ENCODE measurements at regions of chr7 and their contacts with region 1.

Region 1: GRCh38 chr7:44999245-45000095 is 531 bp upstream of the CCM2 start:
- DNase-seq: peak; percentile 98
- ATAC-seq: peak; percentile 88
- H3K4me3 ChIP-seq: peak overlapping the region; percentile 94
- H3K27ac ChIP-seq: peak overlapping the region; percentile 66
- H3K4me1 ChIP-seq: peaks cover 23% of the 10 kb centered on the region
- H3K27me3 ChIP-seq: no peaks in the 10 kb centered on the region
- CTCF ChIP-seq: no peak

Region 2: GRCh38 chr7:44858161-44858560 is 141.3 kb before region 1 on chr7:
- CTCF ChIA-PET with region 1: no interaction called
- POLR2A ChIA-PET with region 1: no interaction called
- intact Hi-C with region 1: loop called (anchors 5 kb)
- DNase-seq: no peak
- ATAC-seq: no peak
- H3K4me3 ChIP-seq: no peak overlapping the region
- H3K27ac ChIP-seq: no peak overlapping the region
- H3K4me1 ChIP-seq: no peaks in the 10 kb centered on the region
- H3K27me3 ChIP-seq: no peaks in the 10 kb centered on the region
- CTCF ChIP-seq: no peak

Region 3: GRCh38 chr7:44973610-44974401 is 25.7 kb before region 1 on chr7:
- CTCF ChIA-PET with region 1: interaction called, 15 read pairs
- POLR2A ChIA-PET with region 1: interaction called, 10 read pairs
- intact Hi-C with region 1: no loop called
- DNase-seq: no peak
- ATAC-seq: no peak
- H3K4me3 ChIP-seq: no peak overlapping the region
- H3K27ac ChIP-seq: no peak overlapping the region
- H3K4me1 ChIP-seq: no peaks in the 10 kb centered on the region
- H3K27me3 ChIP-seq: no peaks in the 10 kb centered on the region
- CTCF ChIP-seq: peak; percentile 49

Region 4: DNA sequence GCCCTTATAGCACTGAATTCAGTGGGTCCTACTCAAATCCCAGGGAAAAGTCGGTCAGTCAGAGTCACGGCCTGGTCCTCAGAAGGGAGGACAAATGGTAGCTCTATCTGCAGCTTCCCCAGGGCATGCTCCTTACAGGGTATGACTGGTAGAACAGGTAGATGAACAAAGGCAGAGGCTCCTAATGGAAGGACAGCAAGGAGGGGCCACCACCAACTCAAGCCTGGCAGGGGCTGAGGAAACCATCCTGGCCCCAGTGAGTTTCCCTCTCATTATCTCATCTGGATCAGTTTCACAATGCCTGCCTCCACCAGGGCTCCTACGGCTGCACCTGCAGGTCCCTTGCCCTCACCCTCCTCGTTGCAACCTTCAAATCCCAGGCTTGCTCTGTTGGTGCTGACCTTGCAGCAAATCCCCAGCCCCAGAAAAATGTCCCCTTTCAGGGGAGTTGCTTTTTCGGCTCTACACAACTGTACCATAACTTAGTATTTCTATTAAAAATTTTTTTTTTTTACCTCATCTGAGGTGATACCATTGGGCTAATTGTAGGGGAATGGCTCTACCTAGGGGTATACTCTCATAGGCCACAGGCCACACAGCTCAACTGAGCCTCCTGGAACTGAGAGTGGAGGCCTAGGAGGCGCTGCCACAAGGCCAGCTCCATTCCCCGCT is 18.3 kb before region 1 on chr7:
- CTCF ChIA-PET with region 1: interaction called, 14 read pairs
- POLR2A ChIA-PET with region 1: interaction called, 18 read pairs
- intact Hi-C with region 1: no loop called
- DNase-seq: no peak
- ATAC-seq: peak; percentile 7; the same call in 1 of the 2 replicates
- H3K4me3 ChIP-seq: no peak overlapping the region
- H3K27ac ChIP-seq: no peak overlapping the region
- H3K4me1 ChIP-seq: peaks cover 16% of the 10 kb centered on the region
- H3K27me3 ChIP-seq: no peaks in the 10 kb centered on the region
- CTCF ChIP-seq: no peak

Region 5: GRCh38 chr7:44986218-44987053 is 13.0 kb before region 1 on chr7:
- CTCF ChIA-PET with region 1: interaction called, 14 read pairs
- POLR2A ChIA-PET with region 1: interaction called, 18 read pairs
- intact Hi-C with region 1: no loop called
- DNase-seq: peak; percentile 94
- ATAC-seq: peak; percentile 98
- H3K4me3 ChIP-seq: peak overlapping the region; percentile 92
- H3K27ac ChIP-seq: peak overlapping the region; percentile 69
- H3K4me1 ChIP-seq: peaks cover 19% of the 10 kb centered on the region
- H3K27me3 ChIP-seq: no peaks in the 10 kb centered on the region
- CTCF ChIP-seq: no peak